Naive thymus-derived CD4-positive, alpha-beta T cell (primary cell): ENCODE measurements at regions of chr6 and their contacts with region 1.

Region 1: GRCh38 chr6:5981126-5982026 is 25.3 kb downstream of the NRN1 start:
- DNase-seq: no peak
- ATAC-seq: no peak
- H3K4me3 ChIP-seq: no peak overlapping the region
- H3K4me3 Mint-ChIP-seq: peak overlapping the region in 1 of 10 donors; percentile 16
- H3K27ac ChIP-seq: no peak overlapping the region
- H3K27ac Mint-ChIP-seq: peak overlapping the region in 1 of 9 donors; percentile 19
- H3K4me1 ChIP-seq: peaks cover 0 to 20% of the 10 kb centered on the region in 2 donors
- H3K4me1 Mint-ChIP-seq: peaks cover 6 to 47% (median 18%) of the 10 kb centered on the region in 7 donors
- H3K27me3 ChIP-seq: no peaks in the 10 kb centered on the region
- H3K27me3 Mint-ChIP-seq: peaks cover 0 to 17% (median 0%) of the 10 kb centered on the region in 5 donors

Region 2: DNA sequence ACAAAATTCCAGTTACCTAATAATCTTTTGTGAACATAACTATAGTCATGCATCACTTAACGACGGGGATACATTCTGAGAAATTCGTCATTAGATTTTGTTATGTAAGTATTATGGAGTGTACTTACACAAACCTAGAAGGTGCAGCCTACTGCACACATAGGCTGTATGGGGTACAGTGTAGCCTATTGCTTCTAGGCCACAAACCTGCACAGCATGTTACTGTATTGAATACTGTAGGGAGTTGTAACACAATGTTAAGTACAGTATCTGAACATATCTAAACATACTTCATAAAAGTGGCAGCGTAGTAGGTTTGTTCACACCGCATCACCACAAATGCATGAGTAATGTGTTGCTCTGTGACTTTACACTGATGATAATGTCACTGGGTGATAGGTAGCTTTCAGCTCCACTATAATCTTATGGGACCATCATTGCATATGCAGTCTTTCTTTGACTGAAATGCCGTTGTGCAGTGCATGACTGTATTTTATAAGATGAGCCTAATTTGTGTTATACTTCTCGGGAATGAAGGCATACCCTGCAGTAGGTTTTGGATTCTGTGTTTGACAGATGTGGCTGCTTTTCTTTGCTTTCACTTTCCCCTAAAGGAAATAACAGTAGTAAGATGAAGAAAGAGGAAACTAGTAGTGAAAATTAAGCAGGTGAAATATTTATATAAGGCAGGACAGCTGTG is 354.5 kb before region 1 on chr6:
- CTCF ChIA-PET with region 1: no interaction called
- POLR2A ChIA-PET with region 1: no interaction called
- intact Hi-C with region 1: loop called in 1 of 2 experiments (anchors 5 kb)
- DNase-seq: peak in 6 of 9 donors; percentile 16 to 47 (median 34)
- ATAC-seq: peak; percentile 71
- H3K4me3 ChIP-seq: peak overlapping the region; percentile 38
- H3K4me3 Mint-ChIP-seq: peak overlapping the region in 9 of 10 donors; percentile 56 to 78 (median 70)
- H3K27ac ChIP-seq: peak overlapping the region; percentile 52
- H3K27ac Mint-ChIP-seq: peak overlapping the region; percentile 45 to 95 (median 85)
- H3K4me1 ChIP-seq: peaks cover 9 to 26% of the 10 kb centered on the region in 2 donors
- H3K4me1 Mint-ChIP-seq: peaks cover 23 to 61% (median 52%) of the 10 kb centered on the region in 7 donors
- H3K27me3 ChIP-seq: no peaks in the 10 kb centered on the region
- H3K27me3 Mint-ChIP-seq: peaks cover 0 to 4% (median 0%) of the 10 kb centered on the region in 5 donors

Region 3: GRCh38 chr6:6024220-6024619 is 42.8 kb after region 1 on chr6:
- CTCF ChIA-PET with region 1: no interaction called
- POLR2A ChIA-PET with region 1: no interaction called
- intact Hi-C with region 1: loop called in 1 of 2 experiments (anchors 5 kb)
- DNase-seq: no peak
- ATAC-seq: no peak
- H3K4me3 ChIP-seq: no peak overlapping the region
- H3K4me3 Mint-ChIP-seq: no peak overlapping the region
- H3K27ac ChIP-seq: no peak overlapping the region
- H3K27ac Mint-ChIP-seq: no peak overlapping the region
- H3K4me1 ChIP-seq: no peaks in the 10 kb centered on the region
- H3K4me1 Mint-ChIP-seq: peaks cover 0 to 4% (median 0%) of the 10 kb centered on the region in 7 donors
- H3K27me3 ChIP-seq: peaks cover 0 to 5% of the 10 kb centered on the region in 2 donors
- H3K27me3 Mint-ChIP-seq: peaks cover 27 to 66% (median 48%) of the 10 kb centered on the region in 5 donors

Region 4: DNA sequence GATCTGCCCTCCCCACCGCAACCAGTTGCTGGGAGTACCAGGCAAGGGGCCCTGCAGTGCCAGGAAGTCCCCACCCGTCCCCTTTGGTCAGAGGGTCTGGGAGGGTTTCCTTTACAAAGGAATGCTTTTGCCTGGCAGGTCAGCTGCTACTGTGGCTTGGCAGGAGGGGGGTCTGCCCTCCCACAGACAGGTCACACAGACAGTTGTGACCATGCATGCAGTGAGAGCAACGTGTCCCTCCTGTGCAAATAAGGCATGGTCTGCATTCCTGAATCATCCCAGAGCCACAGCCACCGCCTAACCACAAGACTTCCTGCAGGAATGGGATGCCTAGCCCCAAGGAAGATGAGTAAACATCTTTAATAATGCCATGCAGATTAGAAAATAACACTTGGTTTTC is 339.5 kb after region 1 on chr6:
- CTCF ChIA-PET with region 1: no interaction called
- POLR2A ChIA-PET with region 1: no interaction called
- intact Hi-C with region 1: no loop called
- DNase-seq: no peak
- ATAC-seq: no peak
- H3K4me3 ChIP-seq: no peak overlapping the region
- H3K4me3 Mint-ChIP-seq: no peak overlapping the region
- H3K27ac ChIP-seq: no peak overlapping the region
- H3K27ac Mint-ChIP-seq: no peak overlapping the region
- H3K4me1 ChIP-seq: no peaks in the 10 kb centered on the region
- H3K4me1 Mint-ChIP-seq: peaks cover 0 to 5% (median 0%) of the 10 kb centered on the region in 7 donors
- H3K27me3 ChIP-seq: peaks cover 0 to 6% of the 10 kb centered on the region in 2 donors
- H3K27me3 Mint-ChIP-seq: peaks cover 54 to 65% (median 59%) of the 10 kb centered on the region in 5 donors